ENCODE measurements at regions of chr17 and their contacts with region 1.

Region 1: DNA sequence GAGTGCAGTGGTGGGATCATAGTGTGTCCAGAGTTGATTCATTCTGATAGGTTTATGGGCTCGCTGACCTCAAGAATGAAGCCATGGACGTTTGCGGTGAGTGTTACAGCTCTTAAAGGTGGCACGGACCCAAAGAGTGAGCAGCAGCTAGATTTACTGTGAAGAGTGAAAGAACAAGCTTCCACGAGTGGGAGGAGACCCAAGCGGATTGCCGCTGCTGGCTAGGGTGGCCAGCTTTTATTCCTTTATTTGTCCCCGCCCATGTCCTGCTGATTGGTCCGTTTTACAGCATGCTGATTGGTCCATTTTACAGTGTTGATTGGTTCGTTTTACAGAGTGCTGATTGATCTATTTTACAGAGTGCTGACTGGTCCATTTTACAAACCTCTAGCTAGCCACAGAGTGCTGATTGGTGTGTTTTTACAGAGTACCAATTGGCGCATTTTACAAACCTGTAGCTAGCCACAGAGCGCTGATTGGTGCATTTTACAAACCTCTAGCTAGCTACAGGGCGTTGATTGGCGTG is 17.5 kb downstream of the CACNG4 start:
- DNase-seq: no peak
- ATAC-seq: 0 out of 2 replicates have a peak, but pooled peaks have one; percentile 17
- H3K4me3 ChIP-seq: no peak overlapping the region
- H3K27ac ChIP-seq: no peak overlapping the region
- H3K4me1 ChIP-seq: peaks cover 22 to 28% of the 10 kb centered on the region in 2 experiments; a peak in 3 of 4 replicates
- H3K27me3 ChIP-seq: peaks cover 20% of the 10 kb centered on the region; the same call in 1 of the 2 replicates
- CTCF ChIP-seq: no peak
- POLR2A ChIP-seq: no peak
- RAD21 ChIP-seq: no peak

Region 2: GRCh38 chr17:66855204-66855603 is 126.8 kb before region 1 on chr17:
- CTCF ChIA-PET with region 1: no interaction called
- POLR2A ChIA-PET with region 1: no interaction called
- RAD21 ChIA-PET with region 1: no interaction called
- intact Hi-C with region 1: loop called (anchors 5 kb)
- DNase-seq: no peak
- ATAC-seq: peak; percentile 78
- H3K4me3 ChIP-seq: no peak overlapping the region
- H3K27ac ChIP-seq: no peak overlapping the region
- H3K4me1 ChIP-seq: 0 out of 4 replicates have a peak, but pooled peaks cover 0 to 3% of the 10 kb centered on the region in 2 experiments
- H3K27me3 ChIP-seq: peaks cover 5% of the 10 kb centered on the region; the same call in 1 of the 2 replicates
- CTCF ChIP-seq: peak; percentile 36 to 85 (median 81); a peak in 5 of 6 replicates
- POLR2A ChIP-seq: no peak
- RAD21 ChIP-seq: peak; percentile 59

Region 3: DNA sequence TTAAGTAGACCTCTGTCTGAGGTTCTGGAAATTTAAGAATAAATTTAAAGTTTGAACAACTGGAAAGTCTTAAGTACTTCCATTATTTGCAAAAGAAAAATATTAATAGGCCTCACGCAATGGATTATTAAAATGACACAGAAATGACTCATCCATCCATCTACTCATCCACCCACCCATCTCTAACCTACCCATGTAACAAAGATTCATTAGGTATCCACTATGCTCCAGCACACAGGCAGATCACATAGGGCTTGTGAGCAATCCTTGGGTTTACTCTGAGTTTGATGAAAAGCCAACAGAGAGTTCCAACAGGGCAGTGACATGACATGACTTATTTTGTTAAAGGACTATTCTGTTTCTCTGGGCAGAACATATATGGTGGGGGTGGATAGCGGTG is 169.7 kb after region 1 on chr17:
- CTCF ChIA-PET with region 1: no interaction called
- POLR2A ChIA-PET with region 1: no interaction called
- RAD21 ChIA-PET with region 1: no interaction called
- intact Hi-C with region 1: no loop called
- DNase-seq: peak; percentile 16
- ATAC-seq: peak; percentile 83
- H3K4me3 ChIP-seq: no peak overlapping the region
- H3K27ac ChIP-seq: no peak overlapping the region
- H3K4me1 ChIP-seq: peaks cover 7 to 18% of the 10 kb centered on the region in 2 experiments
- H3K27me3 ChIP-seq: no peaks in the 10 kb centered on the region
- CTCF ChIP-seq: no peak
- POLR2A ChIP-seq: no peak
- RAD21 ChIP-seq: no peak